Natural killer cell (primary cell): ENCODE measurements at regions of chr3 and their contacts with region 1.

Region 1: GRCh38 chr3:184174646-184175492 is at the start of gene AP2M1:
- DNase-seq: peak; percentile 98
- ATAC-seq: peak; percentile 97 to 100 (median 97)
- H3K4me3 ChIP-seq: peak within 1 kb of the TSS; percentile 96
- H3K4me3 Mint-ChIP-seq: peak within 1 kb of the TSS; percentile 93
- H3K27ac ChIP-seq: peak within 1 kb of the TSS; percentile 71
- H3K27ac Mint-ChIP-seq: peak within 1 kb of the TSS; percentile 71 to 92
- H3K4me1 ChIP-seq: peaks cover 30% of the 10 kb centered on the region
- H3K4me1 Mint-ChIP-seq: peaks cover 25 to 40% of the 10 kb centered on the region in 2 donors
- H3K27me3 ChIP-seq: no peaks in the 10 kb centered on the region
- H3K27me3 Mint-ChIP-seq: no peaks in the 10 kb centered on the region
- CTCF ChIP-seq: no peak
- total RNA-seq, gene AP2M1: 157 to 188 (median 168) TPM

Region 2: DNA sequence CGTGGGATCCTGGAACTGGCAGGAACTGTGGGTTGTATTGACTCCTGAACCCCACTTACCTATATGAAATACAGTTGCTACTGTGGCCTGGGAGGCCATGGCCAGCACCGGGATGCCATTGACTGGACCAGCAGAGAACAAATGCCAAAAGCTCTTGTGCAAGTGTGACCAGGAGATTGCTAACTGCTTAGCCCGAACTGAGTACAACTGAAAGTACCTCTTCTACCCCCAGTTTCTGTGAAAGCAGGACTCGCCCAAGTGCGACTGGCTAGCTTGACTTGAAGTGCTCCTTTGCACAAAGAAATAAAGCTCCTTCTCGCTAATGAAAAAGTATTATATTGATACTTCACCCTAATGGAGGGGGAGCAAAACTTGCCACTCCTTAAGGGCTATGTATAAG is 1482.8 kb before region 1 on chr3:
- intact Hi-C with region 1: no loop called
- DNase-seq: no peak
- ATAC-seq: no peak
- H3K4me3 ChIP-seq: no peak overlapping the region
- H3K4me3 Mint-ChIP-seq: no peak overlapping the region
- H3K27ac ChIP-seq: no peak overlapping the region
- H3K27ac Mint-ChIP-seq: no peak overlapping the region
- H3K4me1 ChIP-seq: no peaks in the 10 kb centered on the region
- H3K4me1 Mint-ChIP-seq: no peaks in the 10 kb centered on the region
- H3K27me3 ChIP-seq: no peaks in the 10 kb centered on the region
- H3K27me3 Mint-ChIP-seq: peaks cover 14 to 34% of the 10 kb centered on the region in 2 donors
- CTCF ChIP-seq: no peak

Region 3: DNA sequence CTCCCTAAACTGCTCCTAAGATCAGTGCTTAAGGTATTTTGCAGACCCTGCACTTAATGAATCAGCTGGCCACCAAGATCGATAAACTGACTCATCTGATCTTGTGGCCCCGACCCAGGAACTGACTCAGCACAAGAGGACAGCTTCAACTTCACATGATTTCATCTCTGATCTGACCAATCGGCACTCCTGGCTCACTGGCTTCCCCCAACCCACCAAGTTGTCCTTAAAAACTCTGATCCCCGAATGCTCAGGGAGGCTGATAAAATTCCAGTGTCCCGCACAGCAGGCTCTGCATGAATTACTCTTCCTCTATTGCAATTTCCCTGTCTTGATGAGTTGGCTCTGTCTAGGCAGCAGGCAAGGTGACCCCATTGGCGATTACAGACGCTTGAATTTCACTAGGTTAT is 64.5 kb before region 1 on chr3:
- intact Hi-C with region 1: no loop called
- DNase-seq: no peak
- ATAC-seq: no peak
- H3K4me3 ChIP-seq: no peak overlapping the region
- H3K4me3 Mint-ChIP-seq: no peak overlapping the region
- H3K27ac ChIP-seq: no peak overlapping the region
- H3K27ac Mint-ChIP-seq: no peak overlapping the region
- H3K4me1 ChIP-seq: no peaks in the 10 kb centered on the region
- H3K4me1 Mint-ChIP-seq: no peaks in the 10 kb centered on the region
- H3K27me3 ChIP-seq: no peaks in the 10 kb centered on the region
- H3K27me3 Mint-ChIP-seq: peaks cover 7 to 15% of the 10 kb centered on the region in 2 donors
- CTCF ChIP-seq: no peak

Region 4: GRCh38 chr3:184185461-184186308 is 10.8 kb after region 1 on chr3 and contains the start of gene ABCF3:
- intact Hi-C with region 1: loop called (anchors 1 kb)
- DNase-seq: peak; percentile 99 to 100
- ATAC-seq: peak; percentile 94 to 97 (median 94)
- H3K4me3 ChIP-seq: peak within 1 kb of the TSS; percentile 81
- H3K4me3 Mint-ChIP-seq: peak within 1 kb of the TSS; percentile 97
- H3K27ac ChIP-seq: peak within 1 kb of the TSS; percentile 74
- H3K27ac Mint-ChIP-seq: peak within 1 kb of the TSS; percentile 86 to 96
- H3K4me1 ChIP-seq: peaks cover 28% of the 10 kb centered on the region
- H3K4me1 Mint-ChIP-seq: peaks cover 36 to 40% of the 10 kb centered on the region in 2 donors
- H3K27me3 ChIP-seq: no peaks in the 10 kb centered on the region
- H3K27me3 Mint-ChIP-seq: no peaks in the 10 kb centered on the region
- CTCF ChIP-seq: no peak
- total RNA-seq, gene ABCF3: 128 to 168 (median 157) TPM